ENCODE measurements at regions of chr13 and their contacts with region 1.

Region 1: DNA sequence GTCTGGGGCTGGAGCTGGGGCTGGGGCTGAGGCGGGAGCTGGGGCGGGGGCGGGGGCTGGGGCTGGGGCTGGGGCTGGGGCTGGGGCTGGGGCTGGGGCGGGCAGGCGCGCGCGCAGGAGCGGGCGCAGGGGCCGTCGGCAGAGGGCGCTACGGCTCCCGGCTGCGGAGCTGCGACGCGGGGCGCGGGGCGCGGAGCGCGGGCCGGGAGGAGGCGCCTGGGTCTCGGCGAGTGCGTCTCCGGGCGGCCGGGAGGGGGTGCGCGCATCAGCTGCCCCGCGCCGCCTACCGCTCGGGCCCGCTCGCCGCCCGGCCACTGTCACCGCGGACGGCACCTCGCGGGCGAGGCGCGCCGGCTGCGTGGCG is 422 bp upstream of the MTUS2 start:
- DNase-seq: peak; percentile 73
- ATAC-seq: peak; percentile 95

Region 2: GRCh38 chr13:28666897-28667488 is 152.7 kb before region 1 on chr13:
- intact Hi-C with region 1: no loop called
- DNase-seq: no peak
- ATAC-seq: no peak

Region 3: GRCh38 chr13:28679628-28680027 is 140.1 kb before region 1 on chr13:
- intact Hi-C with region 1: no loop called
- DNase-seq: no peak
- ATAC-seq: no peak

Region 4: DNA sequence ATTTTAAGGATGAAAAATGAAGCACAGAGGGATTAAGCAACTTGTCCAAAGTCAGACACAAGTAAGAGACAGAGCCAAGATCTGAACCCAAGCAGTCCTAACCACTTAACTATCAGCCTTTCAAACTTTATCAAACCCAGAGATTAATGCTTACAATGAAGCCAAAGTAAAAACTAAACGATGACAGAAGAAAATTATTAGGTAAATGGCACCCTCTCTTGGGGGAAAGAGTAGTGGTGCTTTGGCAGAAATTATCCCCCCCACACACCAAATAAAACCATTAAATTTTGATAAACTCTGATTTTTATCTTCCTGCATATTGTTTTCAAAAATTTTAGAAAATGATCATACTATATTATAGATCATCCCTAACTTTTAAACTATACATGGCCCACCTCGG is 446.5 kb after region 1 on chr13:
- intact Hi-C with region 1: loop called (anchors 2 kb)
- DNase-seq: no peak
- ATAC-seq: no peak

Region 5: DNA sequence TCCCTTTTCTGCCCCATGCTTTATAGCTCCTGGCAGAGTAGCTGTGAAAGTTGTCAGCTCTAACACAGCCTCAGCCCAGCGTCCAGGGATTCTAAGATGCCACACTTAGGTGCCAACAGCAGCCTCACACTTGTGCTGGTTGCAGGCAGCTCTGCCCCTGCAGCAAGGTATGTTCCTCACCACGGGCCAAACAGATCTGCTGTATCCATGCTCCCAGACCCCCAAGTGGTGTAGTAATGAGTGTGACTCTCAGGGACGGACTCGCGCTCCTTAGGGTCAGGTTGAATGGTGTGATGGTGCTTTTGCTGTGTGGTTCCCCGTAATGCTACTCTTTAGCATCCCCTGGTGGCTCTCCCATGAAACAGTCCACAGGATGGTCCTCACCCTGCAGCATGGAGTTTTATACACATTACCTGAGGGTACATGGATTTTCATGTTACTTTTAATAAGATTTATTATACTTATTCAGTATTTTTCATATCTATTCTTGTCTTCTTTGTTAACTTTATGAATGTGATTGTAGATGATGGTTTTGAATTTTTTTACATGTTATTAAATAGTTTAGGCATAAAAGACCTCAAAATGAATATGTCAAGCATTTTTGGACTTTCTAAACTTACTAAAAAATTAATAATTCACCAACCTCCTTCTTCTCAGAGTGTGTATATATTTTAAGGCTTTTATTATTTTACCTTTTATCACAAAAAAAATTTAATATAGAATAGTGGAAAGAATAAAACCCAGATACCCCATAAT is 543.3 kb after region 1 on chr13:
- intact Hi-C with region 1: loop called (anchors 5 kb)
- DNase-seq: no peak
- ATAC-seq: peak; percentile 92

Measured in Right ventricle myocardium superior (tissue), 1 donor.